CD8-positive, alpha-beta T cell (primary cell): ENCODE measurements at regions of chr5 and their contacts with region 1.

Region 1: GRCh38 chr5:112995764-112996618 is 19.4 kb downstream of the DCP2 start:
- DNase-seq: peak; percentile 64 to 85 (median 78)
- ATAC-seq: peak; percentile 94
- H3K4me3 ChIP-seq: no peak overlapping the region
- H3K4me3 Mint-ChIP-seq: no peak overlapping the region
- H3K27ac ChIP-seq: no peak overlapping the region
- H3K27ac Mint-ChIP-seq: no peak overlapping the region
- H3K4me1 ChIP-seq: no peaks in the 10 kb centered on the region
- H3K4me1 Mint-ChIP-seq: peaks cover 32% of the 10 kb centered on the region
- H3K27me3 ChIP-seq: no peaks in the 10 kb centered on the region
- H3K27me3 Mint-ChIP-seq: no peaks in the 10 kb centered on the region
- CTCF ChIP-seq: peak; percentile 99

Region 2: DNA sequence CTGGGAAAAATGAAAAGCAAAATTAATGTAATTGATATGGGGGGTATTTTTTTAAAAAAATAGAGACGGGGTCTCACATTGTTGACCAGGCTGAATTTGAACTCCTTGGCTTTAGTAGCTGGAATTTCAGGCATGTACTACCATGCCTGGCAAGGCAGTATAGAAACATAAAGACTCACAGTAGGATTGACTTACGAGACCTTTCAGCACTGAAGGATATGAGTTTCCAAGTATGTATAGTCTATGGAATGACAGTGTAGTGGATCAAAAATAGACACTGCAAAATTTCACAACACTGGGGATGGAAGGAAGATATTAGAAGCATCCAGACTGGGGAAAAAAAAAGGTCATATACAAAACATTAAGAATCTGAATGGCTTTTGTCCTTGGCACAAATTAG is 12.6 kb before region 1 on chr5:
- CTCF ChIA-PET with region 1: interaction called, 60 read pairs
- POLR2A ChIA-PET with region 1: interaction called, 9 read pairs
- intact Hi-C with region 1: loop called in 1 of 2 experiments (anchors 2 kb)
- DNase-seq: no peak
- ATAC-seq: no peak
- H3K4me3 ChIP-seq: no peak overlapping the region
- H3K4me3 Mint-ChIP-seq: no peak overlapping the region
- H3K27ac ChIP-seq: no peak overlapping the region
- H3K27ac Mint-ChIP-seq: peak overlapping the region; percentile 21
- H3K4me1 ChIP-seq: peaks cover 18% of the 10 kb centered on the region
- H3K4me1 Mint-ChIP-seq: peaks cover 68% of the 10 kb centered on the region
- H3K27me3 ChIP-seq: no peaks in the 10 kb centered on the region
- H3K27me3 Mint-ChIP-seq: no peaks in the 10 kb centered on the region
- CTCF ChIP-seq: no peak

Region 3: DNA sequence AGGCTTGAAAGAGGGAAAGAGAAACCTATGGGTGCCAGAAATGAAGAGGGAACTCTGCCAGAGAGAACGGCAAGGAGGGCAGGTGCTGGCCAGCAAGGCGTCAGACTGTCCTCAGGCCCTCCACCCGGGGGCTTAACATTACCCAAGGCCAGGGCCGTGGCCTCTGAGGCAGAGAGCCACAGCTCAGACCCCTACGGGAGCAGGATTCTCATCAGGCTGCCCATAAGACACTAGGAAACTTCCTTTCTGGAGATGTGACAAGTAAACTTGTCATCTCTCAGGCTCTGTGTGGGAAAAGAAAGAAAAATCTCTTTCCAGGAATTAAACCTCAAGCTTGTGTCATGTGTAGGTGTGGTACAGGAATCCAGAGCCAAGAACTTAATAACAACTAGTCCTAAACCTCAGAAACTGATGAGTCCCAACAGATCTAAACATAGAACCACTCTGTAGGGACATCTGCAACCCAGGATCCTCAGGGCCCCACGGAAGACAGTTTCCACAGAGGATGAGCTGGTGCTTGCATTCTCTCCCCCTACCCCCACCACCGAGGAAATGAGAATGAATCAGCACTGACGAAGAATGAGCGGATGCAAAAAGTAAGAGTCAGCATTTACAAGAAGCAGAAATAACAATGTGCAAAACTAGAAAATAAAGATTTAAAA is 54.9 kb after region 1 on chr5:
- CTCF ChIA-PET with region 1: interaction called, 18 read pairs
- POLR2A ChIA-PET with region 1: no interaction called
- intact Hi-C with region 1: no loop called
- DNase-seq: no peak
- ATAC-seq: no peak
- H3K4me3 ChIP-seq: no peak overlapping the region
- H3K4me3 Mint-ChIP-seq: no peak overlapping the region
- H3K27ac ChIP-seq: no peak overlapping the region
- H3K27ac Mint-ChIP-seq: no peak overlapping the region
- H3K4me1 ChIP-seq: no peaks in the 10 kb centered on the region
- H3K4me1 Mint-ChIP-seq: peaks cover 2% of the 10 kb centered on the region
- H3K27me3 ChIP-seq: no peaks in the 10 kb centered on the region
- H3K27me3 Mint-ChIP-seq: no peaks in the 10 kb centered on the region
- CTCF ChIP-seq: no peak

Region 4: GRCh38 chr5:113204525-113205161 is 208.7 kb after region 1 on chr5:
- CTCF ChIA-PET with region 1: interaction called, 4 read pairs
- POLR2A ChIA-PET with region 1: no interaction called
- intact Hi-C with region 1: loop called in 1 of 2 experiments (anchors 10 kb)
- DNase-seq: no peak
- ATAC-seq: no peak
- H3K4me3 ChIP-seq: no peak overlapping the region
- H3K4me3 Mint-ChIP-seq: no peak overlapping the region
- H3K27ac ChIP-seq: no peak overlapping the region
- H3K27ac Mint-ChIP-seq: no peak overlapping the region
- H3K4me1 ChIP-seq: no peaks in the 10 kb centered on the region
- H3K4me1 Mint-ChIP-seq: peaks cover 2% of the 10 kb centered on the region
- H3K27me3 ChIP-seq: no peaks in the 10 kb centered on the region
- H3K27me3 Mint-ChIP-seq: no peaks in the 10 kb centered on the region
- CTCF ChIP-seq: no peak

Region 5: DNA sequence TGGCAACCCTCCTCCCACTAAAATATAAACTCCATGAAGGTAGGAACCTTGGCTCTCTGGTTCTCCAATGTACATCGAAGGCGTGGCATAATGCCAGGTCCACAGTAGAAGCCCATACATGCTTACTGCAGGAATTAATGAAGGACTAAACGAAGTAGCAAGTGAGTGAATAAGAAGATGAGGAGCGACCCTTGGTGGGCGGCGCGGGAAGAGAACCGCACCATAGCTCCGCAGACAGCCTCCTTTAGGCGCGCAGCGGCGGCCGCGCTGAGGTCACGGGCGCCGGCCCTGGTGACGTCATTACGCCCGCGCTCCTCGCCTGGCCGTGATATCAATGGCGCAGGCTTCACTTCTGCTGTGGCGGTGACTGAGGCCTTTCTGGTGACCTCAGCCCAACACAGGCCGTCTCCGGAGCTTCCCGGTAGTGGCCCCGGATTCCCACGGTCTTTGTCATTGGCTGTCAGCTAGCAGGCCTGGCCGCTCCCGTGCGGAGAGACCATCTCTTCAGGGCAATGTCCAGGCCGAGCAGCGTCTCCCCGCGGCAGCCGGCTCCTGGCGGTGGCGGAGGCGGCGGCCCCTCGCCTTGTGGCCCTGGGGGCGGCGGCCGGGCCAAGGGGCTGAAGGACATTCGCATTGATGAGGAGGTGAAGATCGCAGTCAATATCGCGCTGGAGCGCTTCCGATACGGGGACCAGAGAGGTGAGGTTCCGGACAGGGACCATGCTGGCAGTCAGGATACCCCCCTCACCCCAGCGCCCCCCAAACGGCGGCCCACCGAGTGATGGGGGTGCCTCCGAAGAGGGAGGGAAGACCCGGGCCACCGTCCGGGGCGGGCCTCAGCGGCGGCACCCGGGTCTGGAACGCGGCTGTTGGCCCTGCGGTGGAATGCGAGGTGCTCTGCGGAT is 517.6 kb after region 1 on chr5 and contains the start of gene YTHDC2:
- CTCF ChIA-PET with region 1: interaction called, 5 read pairs
- POLR2A ChIA-PET with region 1: no interaction called
- intact Hi-C with region 1: loop called (anchors 5 kb)
- DNase-seq: peak; percentile 77 to 94 (median 86)
- ATAC-seq: peak; percentile 95
- H3K4me3 ChIP-seq: peak within 1 kb of the TSS; percentile 64 to 78
- H3K4me3 Mint-ChIP-seq: peak within 1 kb of the TSS; percentile 90
- H3K27ac ChIP-seq: peak within 1 kb of the TSS; percentile 86 to 93
- H3K27ac Mint-ChIP-seq: peak within 1 kb of the TSS; percentile 95
- H3K4me1 ChIP-seq: peaks cover 19% of the 10 kb centered on the region
- H3K4me1 Mint-ChIP-seq: peaks cover 38% of the 10 kb centered on the region
- H3K27me3 ChIP-seq: no peaks in the 10 kb centered on the region
- H3K27me3 Mint-ChIP-seq: peaks cover 9% of the 10 kb centered on the region
- CTCF ChIP-seq: no peak
- total RNA-seq, gene YTHDC2: 35.4 to 36.1 TPM